Cardiac septum (tissue), 1 donor: ENCODE measurements at regions of chr1 and their contacts with region 1.

Region 1: DNA sequence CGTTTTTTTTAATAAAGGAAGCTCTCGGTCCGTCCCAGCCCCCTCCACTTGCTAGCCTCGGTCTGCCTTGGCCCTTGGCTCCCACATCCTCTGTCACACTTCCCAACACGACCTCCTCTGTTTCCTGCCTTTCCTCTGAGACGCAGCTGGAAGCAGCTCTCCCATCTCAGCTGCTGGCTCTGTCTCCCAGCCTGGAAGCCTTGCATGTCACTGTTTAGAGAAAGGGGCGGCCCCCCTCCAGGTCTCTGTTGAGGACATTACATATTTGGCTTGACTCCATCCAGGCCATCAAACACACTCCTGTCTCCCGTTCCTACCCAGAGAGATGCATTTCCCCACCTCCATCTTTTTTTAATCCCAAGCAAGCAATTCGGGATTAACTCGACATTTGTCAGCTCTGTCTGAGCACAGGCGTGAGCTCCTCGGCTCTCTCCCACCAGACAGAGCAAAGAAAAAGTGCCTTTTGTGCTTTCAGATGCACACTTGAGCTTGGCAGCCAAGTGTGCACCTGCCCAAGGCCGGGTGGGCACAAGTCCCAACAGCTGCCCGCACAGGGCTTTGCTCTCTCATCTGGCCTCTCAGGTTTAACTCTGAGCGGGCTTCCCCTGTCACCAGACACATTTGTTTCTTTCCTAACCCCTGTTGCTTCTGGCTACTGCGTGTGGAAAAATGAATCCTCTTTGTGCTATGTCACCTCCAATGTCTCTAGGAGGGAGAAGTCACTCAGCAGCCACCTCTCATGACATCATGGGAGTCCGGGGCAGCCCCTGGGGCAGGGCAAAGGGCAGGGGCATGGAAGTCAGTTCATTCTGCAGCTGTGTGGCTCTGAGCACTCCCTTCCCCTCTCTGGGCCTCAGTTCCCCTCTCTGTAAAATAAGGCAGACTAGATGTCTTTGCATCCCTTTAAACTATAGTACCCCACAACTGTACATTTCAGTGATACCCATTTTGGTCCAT is 108.3 kb downstream of the KCND3 start:
- DNase-seq: no peak

Region 2: GRCh38 chr1:111961016-111961415 is 79.9 kb after region 1 on chr1:
- intact Hi-C with region 1: loop called (anchors 5 kb)
- DNase-seq: no peak

Region 3: DNA sequence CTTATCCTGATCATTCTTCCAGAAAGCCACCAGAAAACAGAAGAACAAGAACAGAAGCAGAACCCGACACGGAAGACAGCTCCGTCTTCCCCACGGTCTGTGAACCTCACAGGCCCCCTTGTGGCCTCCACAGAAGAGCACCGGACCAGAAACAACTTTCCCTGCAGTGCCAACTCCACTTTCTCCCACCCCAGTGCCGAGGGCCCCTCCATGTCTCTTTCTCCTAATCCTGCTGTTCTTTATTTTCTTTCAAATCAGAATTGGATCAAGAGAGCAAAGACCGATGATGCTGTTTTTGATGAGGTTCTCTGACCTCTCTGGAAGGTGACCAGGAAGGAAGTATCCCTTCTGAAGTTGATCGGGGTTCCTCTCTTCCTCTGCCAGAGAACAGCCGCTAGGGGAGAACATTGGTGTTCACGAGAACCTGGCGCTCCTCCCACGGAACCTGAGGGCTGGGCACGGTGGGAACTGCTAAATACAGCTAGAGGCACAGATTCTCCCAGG is 455.9 kb after region 1 on chr1:
- intact Hi-C with region 1: loop called (anchors 5 kb)
- DNase-seq: no peak